AG04450 (cell line): ENCODE measurements at regions of chr15 and their contacts with region 1.

Region 1: GRCh38 chr15:57861036-57861638 is 154.6 kb downstream of the POLR2M start:
- DNase-seq: peak; percentile 44
- H3K4me3 ChIP-seq: no peak overlapping the region
- H3K27ac ChIP-seq: no peak overlapping the region
- H3K27me3 ChIP-seq: no peaks in the 10 kb centered on the region
- CTCF ChIP-seq: peak; percentile 84

Region 2: GRCh38 chr15:57418661-57419060 is 442.5 kb before region 1 on chr15:
- CTCF ChIA-PET with region 1: no interaction called
- POLR2A ChIA-PET with region 1: no interaction called
- DNase-seq: no peak
- H3K4me3 ChIP-seq: no peak overlapping the region
- H3K27ac ChIP-seq: no peak overlapping the region
- H3K27me3 ChIP-seq: peaks cover 4% of the 10 kb centered on the region
- CTCF ChIP-seq: no peak

Region 3: DNA sequence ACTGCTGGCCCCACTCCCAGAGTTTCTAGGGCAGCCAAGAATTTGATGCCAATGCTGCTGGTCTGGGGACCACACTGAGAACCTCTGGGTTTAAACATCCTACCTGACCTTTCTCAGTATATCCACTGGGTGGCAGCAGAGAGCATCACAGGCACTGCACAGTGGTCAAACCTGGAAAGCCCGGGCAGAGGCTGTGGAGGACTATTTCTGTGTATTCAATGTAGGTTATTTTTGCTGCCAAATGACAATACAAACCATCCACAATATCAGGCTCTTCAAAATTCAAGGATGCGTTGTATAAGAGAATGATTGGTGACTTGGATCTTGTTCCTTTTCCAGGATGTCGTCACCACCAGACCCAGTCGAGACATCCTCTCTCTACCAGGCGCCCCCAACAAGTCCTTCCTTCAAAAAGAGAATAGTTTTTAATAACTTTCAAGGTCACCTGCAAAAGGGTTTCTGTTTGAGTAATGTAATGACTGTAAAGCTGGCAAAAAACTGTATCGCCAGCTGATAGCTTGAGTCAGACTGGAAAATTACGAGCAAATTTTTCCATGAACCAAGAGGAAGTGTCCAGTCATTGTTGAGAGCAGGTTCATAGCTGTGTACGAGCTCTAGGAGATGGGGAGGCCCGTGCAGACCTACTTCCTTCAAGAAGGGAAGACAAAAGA is 300.0 kb before region 1 on chr15:
- CTCF ChIA-PET with region 1: interaction called, 34 read pairs
- POLR2A ChIA-PET with region 1: no interaction called
- DNase-seq: peak; percentile 26
- H3K4me3 ChIP-seq: no peak overlapping the region
- H3K27ac ChIP-seq: no peak overlapping the region
- H3K27me3 ChIP-seq: peaks cover 12% of the 10 kb centered on the region
- CTCF ChIP-seq: peak; percentile 94

Region 4: GRCh38 chr15:57667171-57667849 is 193.8 kb before region 1 on chr15:
- CTCF ChIA-PET with region 1: interaction called, 99 read pairs
- POLR2A ChIA-PET with region 1: no interaction called
- DNase-seq: peak; percentile 26
- H3K4me3 ChIP-seq: no peak overlapping the region
- H3K27ac ChIP-seq: no peak overlapping the region
- H3K27me3 ChIP-seq: peaks cover 7% of the 10 kb centered on the region
- CTCF ChIP-seq: peak; percentile 59

Region 5: DNA sequence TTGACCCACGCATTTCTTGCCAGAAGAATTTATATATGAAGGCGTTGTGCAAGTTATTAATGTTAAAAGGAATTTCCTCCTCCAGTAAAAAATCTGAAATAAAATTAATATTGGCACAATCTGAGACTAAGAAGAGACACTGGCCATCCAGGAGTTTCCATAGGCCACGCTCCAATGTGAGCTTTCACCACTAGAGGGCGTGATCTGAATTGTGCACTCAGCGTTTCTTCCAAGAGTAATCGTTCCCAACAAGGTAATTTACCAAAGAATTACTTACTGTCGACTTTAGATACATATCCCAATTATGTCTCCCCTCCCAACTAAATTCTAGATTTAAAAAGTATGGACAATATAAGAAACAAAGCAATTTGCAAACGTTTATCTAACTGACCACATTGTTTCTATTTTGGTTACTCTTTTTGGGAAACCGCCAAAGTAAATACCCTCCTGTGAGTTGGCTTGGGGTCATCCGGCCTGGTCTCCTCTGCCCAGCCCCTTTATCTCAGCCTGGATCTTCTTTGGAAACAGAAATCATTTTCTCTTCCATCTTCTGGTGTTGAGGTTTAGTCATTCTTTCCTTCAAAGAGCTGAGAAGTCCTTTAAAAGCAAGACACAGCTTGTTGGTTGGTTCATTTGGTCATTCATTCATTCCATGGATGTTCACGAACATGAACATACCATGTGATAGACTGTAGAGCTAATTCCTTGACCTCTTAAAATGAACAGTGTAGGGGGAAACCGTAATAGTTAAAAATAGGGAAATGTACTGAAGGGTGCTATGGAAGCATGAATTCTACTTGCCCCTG is 128.4 kb before region 1 on chr15:
- CTCF ChIA-PET with region 1: interaction called, 30 read pairs
- POLR2A ChIA-PET with region 1: no interaction called
- DNase-seq: peak; percentile 20
- H3K4me3 ChIP-seq: no peak overlapping the region
- H3K27ac ChIP-seq: no peak overlapping the region
- H3K27me3 ChIP-seq: no peaks in the 10 kb centered on the region
- CTCF ChIP-seq: peak; percentile 88

Region 6: DNA sequence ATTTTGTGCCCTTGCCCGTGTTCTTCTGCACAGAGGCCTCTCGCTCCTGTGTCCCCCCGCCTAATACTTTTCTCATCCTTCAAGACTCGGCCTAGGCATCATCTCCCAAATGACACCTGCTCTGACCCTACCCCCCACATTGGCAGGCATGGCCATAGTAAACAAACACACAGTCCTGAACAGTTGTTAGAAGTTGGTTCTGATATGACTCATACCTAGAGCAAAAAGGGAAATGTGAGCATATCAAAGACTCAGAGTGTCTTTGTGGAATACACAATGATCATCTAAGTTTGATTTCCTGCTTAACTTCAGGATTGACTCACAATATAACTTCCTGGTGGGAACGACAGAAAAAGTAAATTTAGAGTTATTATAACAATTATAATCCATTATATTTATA is 34.1 kb before region 1 on chr15:
- CTCF ChIA-PET with region 1: interaction called, 17 read pairs
- POLR2A ChIA-PET with region 1: no interaction called
- DNase-seq: no peak
- H3K4me3 ChIP-seq: no peak overlapping the region
- H3K27ac ChIP-seq: no peak overlapping the region
- H3K27me3 ChIP-seq: no peaks in the 10 kb centered on the region
- CTCF ChIP-seq: no peak

Region 7: DNA sequence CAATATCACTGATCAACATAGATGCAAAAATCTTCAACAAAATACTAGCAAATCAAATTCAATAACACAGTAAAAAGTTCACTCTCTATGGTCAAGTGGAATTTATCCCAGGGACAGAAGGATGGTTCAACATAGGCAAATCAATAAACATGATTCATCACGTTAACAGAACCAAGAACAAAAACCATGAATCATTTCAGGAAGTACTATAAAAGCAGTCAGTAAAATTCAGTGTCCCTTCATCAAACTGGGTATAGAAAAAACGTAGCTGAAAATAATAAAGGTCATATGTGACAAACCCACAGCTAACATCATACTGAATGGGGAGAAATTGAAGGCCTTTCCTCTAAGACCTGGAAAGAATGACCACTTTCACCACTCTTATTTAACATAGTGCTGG is 17.4 kb after region 1 on chr15:
- CTCF ChIA-PET with region 1: interaction called, 39 read pairs
- POLR2A ChIA-PET with region 1: no interaction called
- DNase-seq: no peak
- H3K4me3 ChIP-seq: no peak overlapping the region
- H3K27ac ChIP-seq: no peak overlapping the region
- H3K27me3 ChIP-seq: peaks cover 4% of the 10 kb centered on the region
- CTCF ChIP-seq: no peak